Activated naive CD4-positive, alpha-beta T cell treated with anti-CD3 and anti-CD28 coated beads for 36 hours (primary cell): ENCODE measurements at regions of chr1 and their contacts with region 1.

Region 1: GRCh38 chr1:78607334-78607927 is 12.8 kb upstream of the IFI44L start:
- DNase-seq: no peak
- H3K4me3 Mint-ChIP-seq: no peak overlapping the region
- H3K27ac Mint-ChIP-seq: no peak overlapping the region
- H3K4me1 Mint-ChIP-seq: no peaks in the 10 kb centered on the region
- H3K27me3 Mint-ChIP-seq: peaks cover 2% of the 10 kb centered on the region

Region 2: DNA sequence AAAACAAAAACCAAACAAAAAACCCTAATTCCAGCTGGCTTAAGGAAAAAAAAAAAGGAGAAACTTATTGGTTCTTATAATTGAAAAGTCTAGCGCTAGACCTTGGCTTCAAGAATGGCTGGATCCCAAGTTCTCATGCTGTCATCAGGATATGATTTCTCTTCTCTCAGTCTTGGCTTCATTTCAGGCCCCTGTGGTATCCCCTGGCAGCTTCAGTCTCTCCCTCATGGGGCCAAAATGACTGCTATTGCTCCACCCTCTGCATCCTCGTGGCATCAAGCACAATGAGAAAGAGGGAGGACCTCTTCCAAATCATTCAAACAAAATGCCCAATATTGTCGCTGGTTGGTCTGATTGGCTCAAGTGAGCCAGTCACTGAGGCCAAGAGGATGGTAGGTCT is 480.9 kb before region 1 on chr1:
- CTCF ChIA-PET with region 1: interaction called, 21 read pairs
- intact Hi-C with region 1: loop called (anchors 1 kb)
- DNase-seq: no peak
- H3K4me3 Mint-ChIP-seq: no peak overlapping the region
- H3K27ac Mint-ChIP-seq: no peak overlapping the region
- H3K4me1 Mint-ChIP-seq: no peaks in the 10 kb centered on the region
- H3K27me3 Mint-ChIP-seq: no peaks in the 10 kb centered on the region

Region 3: GRCh38 chr1:78132174-78132947 is 475.1 kb before region 1 on chr1:
- CTCF ChIA-PET with region 1: interaction called, 21 read pairs
- intact Hi-C with region 1: loop called (anchors 1 kb)
- DNase-seq: no peak
- H3K4me3 Mint-ChIP-seq: no peak overlapping the region
- H3K27ac Mint-ChIP-seq: no peak overlapping the region
- H3K4me1 Mint-ChIP-seq: no peaks in the 10 kb centered on the region
- H3K27me3 Mint-ChIP-seq: no peaks in the 10 kb centered on the region

Region 4: GRCh38 chr1:78145105-78145580 is 462.3 kb before region 1 on chr1:
- CTCF ChIA-PET with region 1: interaction called, 28 read pairs
- intact Hi-C with region 1: loop called (anchors 1 kb)
- DNase-seq: peak; percentile 60
- H3K4me3 Mint-ChIP-seq: no peak overlapping the region
- H3K27ac Mint-ChIP-seq: no peak overlapping the region
- H3K4me1 Mint-ChIP-seq: peaks cover 21% of the 10 kb centered on the region
- H3K27me3 Mint-ChIP-seq: peaks cover 3% of the 10 kb centered on the region

Region 5: GRCh38 chr1:78277253-78277652 is 330.2 kb before region 1 on chr1:
- CTCF ChIA-PET with region 1: no interaction called
- intact Hi-C with region 1: loop called (anchors 5 kb)
- DNase-seq: no peak
- H3K4me3 Mint-ChIP-seq: no peak overlapping the region
- H3K27ac Mint-ChIP-seq: no peak overlapping the region
- H3K4me1 Mint-ChIP-seq: no peaks in the 10 kb centered on the region
- H3K27me3 Mint-ChIP-seq: peaks cover 12% of the 10 kb centered on the region

Region 6: DNA sequence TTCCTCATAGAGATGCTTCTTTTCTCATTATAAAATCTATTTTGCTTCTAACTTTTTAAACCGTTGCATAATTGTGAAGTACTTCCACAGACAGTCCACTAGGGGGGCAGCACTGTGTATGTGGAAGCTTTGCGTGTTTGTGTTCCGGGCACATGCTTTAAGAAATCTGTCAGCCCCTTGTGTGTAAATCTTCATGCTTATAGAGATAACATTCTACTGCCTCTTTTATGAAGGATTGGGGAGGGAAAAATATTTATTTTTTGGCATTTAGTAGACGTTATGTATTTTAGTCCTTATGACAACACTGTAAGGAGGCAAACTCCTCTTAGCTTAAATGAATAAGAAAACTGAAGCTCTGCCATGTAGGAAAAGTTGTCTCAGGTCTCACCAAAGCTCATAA is 273.9 kb before region 1 on chr1:
- CTCF ChIA-PET with region 1: interaction called, 6 read pairs
- intact Hi-C with region 1: loop called (anchors 1 kb)
- DNase-seq: peak; percentile 8
- H3K4me3 Mint-ChIP-seq: no peak overlapping the region
- H3K27ac Mint-ChIP-seq: no peak overlapping the region
- H3K4me1 Mint-ChIP-seq: no peaks in the 10 kb centered on the region
- H3K27me3 Mint-ChIP-seq: peaks cover 2% of the 10 kb centered on the region